Activated CD4-positive, alpha-beta memory T cell treated with anti-CD3 and anti-CD28 coated beads for 36 hours (primary cell): ENCODE measurements at regions of chr13 and their contacts with region 1.

Region 1: DNA sequence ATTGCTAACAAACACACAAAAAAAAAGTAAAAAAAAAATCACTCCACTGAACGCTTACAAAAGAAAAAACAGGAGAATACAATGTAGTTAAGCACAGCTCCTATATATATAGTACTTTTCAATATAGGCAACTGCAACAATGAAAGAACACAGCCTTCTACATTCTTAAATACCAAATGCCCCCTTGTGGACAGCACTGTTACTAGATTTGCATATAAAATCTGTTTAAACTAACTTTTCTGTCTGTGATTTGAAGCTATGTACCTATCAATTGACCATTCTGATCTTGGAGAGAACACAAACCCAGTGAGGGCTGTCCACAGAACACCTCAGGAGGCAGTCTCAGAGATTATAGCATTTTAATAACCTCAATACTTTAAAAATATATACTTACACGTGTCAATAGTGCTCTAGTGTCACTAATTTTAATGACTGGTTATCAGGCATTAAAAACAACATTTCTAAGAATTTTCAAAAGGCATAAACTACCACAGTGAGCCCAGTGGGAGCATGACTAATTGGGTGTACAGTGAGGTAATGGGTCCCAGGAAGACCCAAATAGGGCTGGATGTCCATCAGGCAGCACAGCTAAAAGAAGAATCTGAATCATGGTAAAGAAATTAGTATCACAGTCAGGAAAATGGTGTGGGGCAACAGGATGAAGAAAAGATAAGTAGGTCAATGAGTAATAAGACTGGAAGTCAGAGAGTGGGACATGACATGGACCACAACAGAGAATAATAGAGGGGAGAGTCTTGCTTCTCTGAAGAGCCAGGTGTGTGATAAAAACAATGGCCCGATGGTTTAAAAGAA is 22.2 kb downstream of the CCDC169 start:
- DNase-seq: no peak
- H3K4me3 Mint-ChIP-seq: no peak overlapping the region
- H3K27ac Mint-ChIP-seq: no peak overlapping the region
- H3K4me1 Mint-ChIP-seq: no peaks in the 10 kb centered on the region
- H3K27me3 Mint-ChIP-seq: peaks cover 4% of the 10 kb centered on the region

Region 2: DNA sequence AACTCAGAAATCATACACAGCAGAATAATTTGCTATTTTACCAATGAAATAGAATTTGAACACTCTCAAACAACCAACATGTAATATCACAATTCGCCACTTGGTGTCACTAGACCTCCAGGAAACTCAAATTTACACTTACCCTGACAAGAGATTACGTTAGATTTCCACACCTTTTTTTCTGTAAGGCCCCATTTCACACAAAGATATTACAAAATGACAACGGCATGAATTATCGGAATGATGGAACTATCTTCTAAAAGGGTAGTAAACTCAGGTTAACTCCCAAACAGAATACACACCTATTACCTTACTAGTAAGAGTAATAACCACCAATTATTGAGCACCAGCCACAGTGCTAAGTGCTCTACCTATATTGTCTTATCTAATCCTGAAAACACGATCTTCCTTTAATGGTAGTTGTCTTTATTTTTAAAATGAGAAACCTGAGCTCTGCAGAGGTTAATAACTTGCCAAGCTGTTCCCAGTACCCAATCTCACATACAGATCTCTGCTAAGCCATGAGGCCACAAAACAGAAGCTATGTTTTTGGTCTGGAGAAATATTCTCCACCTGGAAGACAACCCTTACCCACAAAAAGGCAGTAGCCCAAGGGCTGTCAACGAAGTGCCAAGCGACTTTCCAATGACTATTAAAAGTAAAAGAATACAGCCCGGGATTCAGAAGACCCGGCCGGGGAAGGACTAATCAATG is 296.6 kb before region 1 on chr13:
- CTCF ChIA-PET with region 1: interaction called, 37 read pairs
- POLR2A ChIA-PET with region 1: no interaction called
- intact Hi-C with region 1: loop called (anchors 1 kb)
- DNase-seq: no peak
- H3K4me3 Mint-ChIP-seq: no peak overlapping the region
- H3K27ac Mint-ChIP-seq: no peak overlapping the region
- H3K4me1 Mint-ChIP-seq: no peaks in the 10 kb centered on the region
- H3K27me3 Mint-ChIP-seq: peaks cover 2% of the 10 kb centered on the region

Region 3: DNA sequence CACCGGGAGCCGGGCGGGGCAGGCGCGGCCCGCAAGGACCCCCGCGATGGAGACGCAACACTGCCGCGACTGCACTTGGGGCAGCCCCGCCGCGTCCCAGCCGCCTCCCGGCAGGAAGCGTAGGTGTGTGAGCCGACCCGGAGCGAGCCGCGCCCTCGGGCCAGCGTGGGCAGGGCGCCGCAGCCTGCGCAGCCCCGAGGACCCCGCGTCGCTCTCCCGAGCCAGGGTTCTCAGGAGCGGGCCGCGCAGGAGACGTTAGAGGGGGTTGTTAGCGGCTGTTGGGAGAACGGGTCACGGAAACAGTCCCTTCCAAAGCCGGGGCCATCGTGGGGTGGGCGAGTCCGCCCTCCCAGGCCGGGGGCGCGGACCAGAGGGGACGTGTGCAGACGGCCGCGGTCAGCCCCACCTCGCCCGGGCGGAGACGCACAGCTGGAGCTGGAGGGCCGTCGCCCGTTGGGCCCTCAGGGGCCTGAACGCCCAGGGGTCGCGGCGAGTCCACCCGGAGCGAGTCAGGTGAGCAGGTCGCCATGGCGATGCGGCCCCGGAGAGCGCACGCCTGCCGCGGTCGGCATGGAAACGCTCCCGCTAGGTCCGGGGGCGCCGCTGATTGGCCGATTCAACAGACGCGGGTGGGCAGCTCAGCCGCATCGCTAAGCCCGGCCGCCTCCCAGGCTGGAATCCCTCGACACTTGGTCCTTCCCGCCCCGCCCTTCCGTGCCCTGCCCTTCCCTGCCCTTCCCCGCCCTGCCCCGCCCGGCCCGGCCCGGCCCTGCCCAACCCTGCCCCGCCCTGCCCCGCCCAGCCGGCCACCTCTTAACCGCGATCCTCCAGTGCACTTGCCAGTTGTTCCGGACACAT is 156.5 kb after region 1 on chr13 and contains the start of gene CCNA1:
- CTCF ChIA-PET with region 1: no interaction called
- POLR2A ChIA-PET with region 1: no interaction called
- intact Hi-C with region 1: no loop called
- DNase-seq: peak; percentile 44
- H3K4me3 Mint-ChIP-seq: peak within 1 kb of the TSS; percentile 31
- H3K27ac Mint-ChIP-seq: no peak within 1 kb of the TSS
- H3K4me1 Mint-ChIP-seq: peaks cover 8% of the 10 kb centered on the region
- H3K27me3 Mint-ChIP-seq: peaks cover 46% of the 10 kb centered on the region
- total RNA-seq, gene CCNA1: 0.62 to 0.87 TPM